Panc1 (cell line): ENCODE measurements at regions of chr17 and their contacts with region 1.

Region 1: DNA sequence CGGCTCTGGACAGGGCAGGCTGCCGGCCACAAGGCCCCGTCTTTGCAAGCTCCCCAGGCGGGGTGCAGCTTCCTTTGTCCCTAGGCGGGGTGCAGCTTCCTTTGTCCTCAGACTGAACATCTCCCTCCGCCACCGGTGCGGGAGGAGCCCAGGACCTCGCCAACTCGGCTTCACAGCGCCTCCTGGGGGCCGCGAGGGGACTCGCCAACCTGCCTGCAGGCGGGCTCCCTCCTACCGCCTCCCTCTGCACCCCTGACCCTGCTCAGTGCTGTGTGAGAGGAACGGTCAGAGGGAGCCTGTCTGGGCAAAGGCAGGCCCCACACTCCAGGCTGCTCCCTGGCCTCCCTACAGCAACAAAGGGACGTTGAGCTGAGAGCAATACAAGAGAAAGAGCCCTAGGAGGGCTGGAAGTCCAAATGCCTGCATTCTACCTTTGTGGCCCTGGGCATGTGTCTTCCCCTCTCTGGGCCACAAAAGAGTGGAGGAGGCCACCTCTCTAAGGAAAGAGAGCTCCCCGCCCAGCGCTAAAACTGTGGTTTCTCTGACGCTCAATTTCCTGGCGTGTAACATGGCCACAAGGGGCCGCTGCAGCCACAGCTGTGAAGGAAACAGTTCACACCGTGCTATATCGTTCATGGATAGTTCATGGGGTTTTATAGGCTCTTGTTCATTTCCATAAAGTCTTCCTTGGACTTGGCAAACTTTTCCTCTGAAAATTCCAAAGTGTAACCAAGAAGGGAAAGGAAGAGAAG is 20.9 kb upstream of the KRT19 start:
- DNase-seq: no peak
- ATAC-seq: peak; percentile 88
- H3K4me3 ChIP-seq: peak overlapping the region; percentile 24 to 39
- H3K27ac ChIP-seq: peak overlapping the region; percentile 91
- H3K4me1 ChIP-seq: peaks cover 41% of the 10 kb centered on the region
- H3K27me3 ChIP-seq: no peaks in the 10 kb centered on the region
- CTCF ChIP-seq: peak; percentile 95

Region 2: DNA sequence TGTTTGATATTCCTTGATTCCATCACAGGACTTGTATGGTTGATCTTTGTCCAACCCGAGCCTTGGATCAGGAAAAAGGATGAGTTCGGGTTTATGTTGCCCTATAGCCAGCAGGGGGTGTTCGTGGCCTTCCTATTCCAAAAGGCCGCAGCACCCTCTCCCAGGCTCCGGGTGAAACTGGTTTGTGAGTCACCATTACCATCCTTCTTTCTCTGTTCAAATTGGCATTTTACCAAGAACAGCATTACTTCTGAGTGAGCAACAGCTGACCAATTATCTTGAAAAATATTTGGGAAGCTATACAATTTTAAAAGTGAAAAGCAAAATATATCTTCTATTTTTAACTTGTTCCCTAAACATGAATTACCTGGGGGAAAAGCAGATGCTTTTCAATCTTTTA is 639.7 kb before region 1 on chr17:
- CTCF ChIA-PET with region 1: interaction called, 5 read pairs
- POLR2A ChIA-PET with region 1: no interaction called
- in situ Hi-C with region 1: no loop called
- intact Hi-C with region 1: loop called (anchors 5 kb)
- DNase-seq: no peak
- ATAC-seq: peak; percentile 97
- H3K4me3 ChIP-seq: no peak overlapping the region
- H3K27ac ChIP-seq: peak overlapping the region; percentile 2; the same call in 1 of the 2 replicates
- H3K4me1 ChIP-seq: peaks cover 11% of the 10 kb centered on the region; the same call in 1 of the 2 replicates
- H3K27me3 ChIP-seq: no peaks in the 10 kb centered on the region; the same call in 1 of the 2 replicates
- CTCF ChIP-seq: peak; percentile 85

Region 3: DNA sequence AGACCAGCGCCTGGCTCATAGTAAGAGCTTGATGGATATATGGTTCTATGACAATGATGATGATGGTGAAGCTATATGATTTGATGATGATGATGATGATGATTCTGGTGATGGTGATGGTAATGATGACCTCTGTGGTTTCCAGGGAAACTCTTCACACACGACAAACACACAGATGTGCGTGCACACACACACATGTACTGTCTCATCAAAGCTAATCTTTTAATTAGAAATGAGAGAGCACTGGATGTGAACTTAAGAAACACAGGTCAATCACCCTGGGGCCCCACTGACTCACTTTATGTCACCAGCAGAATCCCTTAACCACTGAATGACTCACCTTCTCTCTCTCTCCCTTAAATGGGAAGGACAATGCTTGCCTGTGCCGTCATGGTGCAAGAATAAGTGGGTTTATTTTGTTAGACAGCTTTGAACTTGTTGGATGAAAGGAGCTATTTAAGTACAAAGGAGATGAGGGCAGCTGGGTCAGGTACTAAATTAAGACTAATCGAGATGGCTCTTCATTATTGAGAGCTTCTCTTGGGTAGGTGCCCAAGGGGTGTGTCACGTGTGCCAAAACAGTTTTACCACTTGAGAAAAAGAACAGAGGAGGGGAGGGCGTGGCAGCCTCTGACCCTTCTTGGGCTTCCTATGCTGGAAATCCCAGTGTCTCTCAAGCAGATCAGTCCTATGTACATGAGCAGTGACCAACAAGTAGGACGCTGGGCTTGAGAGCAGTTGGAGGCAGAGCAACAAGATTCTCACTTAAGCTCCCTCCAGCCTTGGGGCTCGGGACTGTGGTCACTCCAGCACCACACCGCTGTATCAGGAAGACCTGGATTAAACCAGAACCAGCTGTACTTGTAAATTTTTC is 145.0 kb before region 1 on chr17:
- CTCF ChIA-PET with region 1: interaction called, 10 read pairs
- POLR2A ChIA-PET with region 1: no interaction called
- in situ Hi-C with region 1: no loop called
- intact Hi-C with region 1: no loop called
- DNase-seq: peak; percentile 60
- ATAC-seq: peak; percentile 77
- H3K4me3 ChIP-seq: no peak overlapping the region
- H3K27ac ChIP-seq: peak overlapping the region; percentile 13; the same call in 1 of the 2 replicates
- H3K4me1 ChIP-seq: peaks cover 13% of the 10 kb centered on the region
- H3K27me3 ChIP-seq: no peaks in the 10 kb centered on the region
- CTCF ChIP-seq: no peak

Region 4: GRCh38 chr17:41464682-41465081 is 84.3 kb before region 1 on chr17:
- CTCF ChIA-PET with region 1: no interaction called
- POLR2A ChIA-PET with region 1: no interaction called
- in situ Hi-C with region 1: no loop called
- intact Hi-C with region 1: no loop called
- DNase-seq: peak; percentile 90
- ATAC-seq: peak; percentile 99
- H3K4me3 ChIP-seq: no peak overlapping the region
- H3K27ac ChIP-seq: peak overlapping the region; percentile 85
- H3K4me1 ChIP-seq: peaks cover 17% of the 10 kb centered on the region
- H3K27me3 ChIP-seq: no peaks in the 10 kb centered on the region
- CTCF ChIP-seq: no peak

Region 5: DNA sequence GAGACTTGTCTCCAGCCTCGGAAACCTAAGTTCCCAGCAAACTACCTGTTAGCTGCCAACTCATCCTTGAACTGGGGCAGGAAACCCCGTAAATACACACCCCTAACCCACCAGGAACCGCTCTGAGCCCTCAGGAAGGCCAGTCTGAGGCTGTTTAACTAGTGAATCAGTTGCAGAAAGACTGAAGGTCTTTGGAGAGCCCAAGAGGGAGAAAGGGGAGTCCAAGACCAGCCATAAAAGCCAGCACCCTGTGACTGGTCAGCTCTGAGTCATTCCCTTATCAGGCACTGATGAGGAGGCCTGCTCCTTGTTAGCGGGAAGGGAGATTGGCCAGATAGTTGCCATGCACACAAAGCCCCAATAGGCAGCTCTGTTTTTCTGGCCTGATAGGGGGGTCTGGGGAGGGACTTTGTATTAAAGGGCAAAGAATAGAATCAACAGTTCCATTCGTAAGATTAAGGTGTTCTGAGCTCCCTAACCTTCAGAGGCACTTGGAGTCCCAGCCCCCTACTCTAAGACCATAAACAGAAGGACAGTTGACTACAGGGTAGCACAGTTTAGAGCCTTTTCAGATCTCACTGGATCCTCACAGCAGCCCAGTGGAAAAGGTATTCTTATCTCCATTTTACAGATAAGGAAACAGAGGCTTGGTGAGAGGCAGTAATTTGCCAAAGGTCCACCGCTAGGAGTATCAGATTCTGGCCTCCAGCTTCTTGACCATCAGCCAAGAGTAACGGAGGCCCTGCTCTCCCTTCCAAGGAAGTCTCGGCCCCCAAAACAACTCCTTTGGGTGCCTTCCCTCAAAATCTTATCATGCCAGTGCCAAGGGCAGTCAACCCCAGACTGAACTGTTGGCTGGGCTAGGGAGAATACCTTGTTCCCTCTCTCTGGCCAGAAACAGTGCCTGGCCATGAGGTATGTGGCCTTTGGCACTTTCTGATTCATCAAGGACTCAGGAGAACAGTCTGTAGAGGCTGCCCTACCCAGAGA is 18.7 kb before region 1 on chr17:
- CTCF ChIA-PET with region 1: interaction called, 46 read pairs
- POLR2A ChIA-PET with region 1: interaction called, 12 read pairs
- in situ Hi-C with region 1: no loop called
- intact Hi-C with region 1: no loop called
- DNase-seq: no peak
- ATAC-seq: peak; percentile 75
- H3K4me3 ChIP-seq: peak overlapping the region; percentile 0 to 3; a peak in 3 of 4 replicates
- H3K27ac ChIP-seq: peak overlapping the region; percentile 96
- H3K4me1 ChIP-seq: peaks cover 48% of the 10 kb centered on the region
- H3K27me3 ChIP-seq: no peaks in the 10 kb centered on the region
- CTCF ChIP-seq: no peak

Region 6: GRCh38 chr17:41579484-41580243 is 30.6 kb after region 1 on chr17:
- CTCF ChIA-PET with region 1: interaction called, 16 read pairs
- POLR2A ChIA-PET with region 1: no interaction called
- in situ Hi-C with region 1: no loop called
- intact Hi-C with region 1: no loop called
- DNase-seq: peak; percentile 59
- ATAC-seq: peak; percentile 94
- H3K4me3 ChIP-seq: peak overlapping the region in 1 of 2 experiments; percentile 52; a peak in 2 of 4 replicates
- H3K27ac ChIP-seq: peak overlapping the region; percentile 52
- H3K4me1 ChIP-seq: peaks cover 9% of the 10 kb centered on the region; the same call in 1 of the 2 replicates
- H3K27me3 ChIP-seq: no peaks in the 10 kb centered on the region
- CTCF ChIP-seq: peak; percentile 91

Region 7: DNA sequence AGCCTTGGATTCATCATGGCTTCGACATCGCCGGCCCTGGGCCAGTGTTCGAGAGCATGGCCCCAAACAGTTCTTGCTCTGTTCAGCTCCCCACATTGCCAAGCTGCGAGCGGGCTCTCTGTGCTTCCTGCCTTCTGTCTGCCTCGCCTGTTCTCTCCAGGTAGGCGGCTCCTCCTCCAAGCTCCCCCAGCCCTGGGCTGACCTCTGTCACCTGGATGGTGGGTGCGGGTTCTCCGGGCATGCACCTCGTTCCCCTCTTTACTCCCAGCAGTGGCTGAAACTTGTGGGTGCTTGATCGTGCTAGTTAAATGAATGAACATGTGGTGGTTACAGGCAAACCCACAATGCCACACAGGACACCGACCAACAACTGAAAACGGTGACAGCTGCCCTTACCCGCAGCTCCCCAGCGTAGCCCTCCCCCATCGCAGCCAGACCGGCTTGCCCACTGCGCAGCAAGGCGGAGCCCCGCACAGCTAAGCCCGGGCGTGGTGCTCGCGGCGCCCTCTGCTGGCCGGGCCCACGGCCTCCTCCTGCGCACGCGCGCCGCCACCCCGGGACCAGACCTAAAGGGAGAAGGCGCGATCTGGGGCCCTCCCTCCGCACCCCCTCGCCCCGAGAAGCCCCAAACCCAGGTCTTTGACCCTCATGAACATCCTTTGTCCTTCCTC is 116.7 kb after region 1 on chr17:
- CTCF ChIA-PET with region 1: interaction called, 104 read pairs
- POLR2A ChIA-PET with region 1: no interaction called
- in situ Hi-C with region 1: no loop called
- intact Hi-C with region 1: loop called (anchors 2 kb)
- DNase-seq: no peak
- ATAC-seq: peak; percentile 90
- H3K4me3 ChIP-seq: peak overlapping the region; percentile 41 to 76
- H3K27ac ChIP-seq: peak overlapping the region; percentile 92
- H3K4me1 ChIP-seq: peaks cover 23% of the 10 kb centered on the region
- H3K27me3 ChIP-seq: no peaks in the 10 kb centered on the region
- CTCF ChIP-seq: peak; percentile 99

Region 8: GRCh38 chr17:41758601-41759000 is 209.6 kb after region 1 on chr17:
- CTCF ChIA-PET with region 1: no interaction called
- POLR2A ChIA-PET with region 1: no interaction called
- in situ Hi-C with region 1: no loop called
- intact Hi-C with region 1: no loop called
- DNase-seq: no peak
- ATAC-seq: no peak
- H3K4me3 ChIP-seq: no peak overlapping the region
- H3K27ac ChIP-seq: no peak overlapping the region
- H3K4me1 ChIP-seq: no peaks in the 10 kb centered on the region
- H3K27me3 ChIP-seq: no peaks in the 10 kb centered on the region
- CTCF ChIP-seq: no peak